Motor neuron (in vitro differentiated cells): ENCODE measurements at regions of chr2 and their contacts with region 1.

Region 1: DNA sequence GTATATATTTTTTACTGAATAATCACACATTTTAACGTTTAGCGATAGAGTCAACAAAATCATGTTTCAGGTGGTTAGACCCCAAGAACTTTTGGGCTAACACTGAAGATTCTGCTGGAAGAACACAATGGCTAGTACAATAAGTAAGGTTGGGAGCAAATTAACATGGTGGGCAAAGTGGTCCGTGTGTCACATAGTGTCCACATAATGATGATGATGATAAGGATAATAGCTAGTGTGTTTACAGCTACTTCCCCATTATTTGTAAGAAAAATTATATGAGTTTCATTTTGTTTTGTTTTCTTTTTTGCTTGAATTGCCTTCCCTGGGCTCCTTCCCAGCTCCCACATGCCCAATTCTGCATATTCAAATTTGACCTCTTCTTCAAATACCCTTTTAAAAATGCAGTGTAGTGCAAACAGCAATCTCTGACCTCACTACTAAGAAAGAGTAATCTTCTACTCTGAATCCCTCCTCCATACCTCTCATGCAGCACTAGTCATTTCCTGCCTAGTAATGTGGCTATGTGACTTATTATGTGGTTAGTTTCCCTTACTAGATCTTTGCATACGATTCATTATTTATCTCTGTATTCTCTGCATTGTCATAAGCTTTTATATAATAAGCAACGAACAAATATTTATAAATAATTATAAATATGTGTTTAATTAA is 16.9 kb upstream of the VPS54 start:
- ATAC-seq: peak in 2 of 8 experiments; percentile 71 to 92
- H3K4me3 ChIP-seq: no peak overlapping the region
- H3K27ac ChIP-seq: no peak overlapping the region
- H3K4me1 ChIP-seq: no peaks in the 10 kb centered on the region

Region 2: DNA sequence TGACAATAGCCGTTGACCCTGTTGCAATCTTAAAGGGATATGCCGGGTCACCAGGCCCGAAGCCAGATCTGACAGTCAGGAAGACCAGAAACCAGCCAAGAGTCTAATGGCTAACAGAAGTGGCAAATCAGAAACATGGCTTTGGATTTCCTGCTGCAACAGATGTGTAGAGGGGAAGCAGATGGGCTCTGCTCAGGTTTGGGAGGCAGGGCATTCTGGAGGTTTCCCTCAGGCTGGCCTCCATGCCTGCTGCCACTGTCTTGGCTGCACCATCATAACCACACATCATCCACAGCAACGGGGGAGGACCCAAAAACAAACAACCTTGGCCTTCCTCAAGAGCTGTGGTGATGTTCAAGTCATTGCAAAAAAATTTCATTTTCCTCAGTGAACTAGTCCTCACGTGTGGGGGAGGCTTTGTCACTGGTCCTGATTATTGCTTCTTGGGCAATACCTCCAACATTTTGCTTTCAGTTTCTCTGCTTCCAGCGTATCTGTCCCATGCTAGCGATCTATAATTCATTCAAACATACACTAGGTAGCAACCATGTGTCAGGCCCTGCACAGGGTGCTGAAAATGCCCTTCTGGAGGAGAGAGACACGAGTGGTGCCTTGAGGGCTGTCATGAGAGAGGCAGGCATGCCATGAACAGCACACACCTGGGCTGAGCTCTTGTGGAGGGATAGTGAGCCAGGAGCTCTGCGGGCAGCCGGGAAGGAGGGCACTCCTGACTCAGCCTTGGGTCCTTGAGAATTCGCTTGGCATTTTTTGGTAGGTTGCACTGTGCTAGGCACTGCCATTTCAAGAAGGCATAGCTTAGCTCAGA is 369.6 kb after region 1 on chr2:
- in situ Hi-C with region 1: no loop called
- ATAC-seq: peak in 2 of 8 experiments; percentile 4 to 12
- H3K4me3 ChIP-seq: no peak overlapping the region
- H3K27ac ChIP-seq: no peak overlapping the region
- H3K4me1 ChIP-seq: peaks cover 52 to 56% of the 10 kb centered on the region in 2 donors

Region 3: DNA sequence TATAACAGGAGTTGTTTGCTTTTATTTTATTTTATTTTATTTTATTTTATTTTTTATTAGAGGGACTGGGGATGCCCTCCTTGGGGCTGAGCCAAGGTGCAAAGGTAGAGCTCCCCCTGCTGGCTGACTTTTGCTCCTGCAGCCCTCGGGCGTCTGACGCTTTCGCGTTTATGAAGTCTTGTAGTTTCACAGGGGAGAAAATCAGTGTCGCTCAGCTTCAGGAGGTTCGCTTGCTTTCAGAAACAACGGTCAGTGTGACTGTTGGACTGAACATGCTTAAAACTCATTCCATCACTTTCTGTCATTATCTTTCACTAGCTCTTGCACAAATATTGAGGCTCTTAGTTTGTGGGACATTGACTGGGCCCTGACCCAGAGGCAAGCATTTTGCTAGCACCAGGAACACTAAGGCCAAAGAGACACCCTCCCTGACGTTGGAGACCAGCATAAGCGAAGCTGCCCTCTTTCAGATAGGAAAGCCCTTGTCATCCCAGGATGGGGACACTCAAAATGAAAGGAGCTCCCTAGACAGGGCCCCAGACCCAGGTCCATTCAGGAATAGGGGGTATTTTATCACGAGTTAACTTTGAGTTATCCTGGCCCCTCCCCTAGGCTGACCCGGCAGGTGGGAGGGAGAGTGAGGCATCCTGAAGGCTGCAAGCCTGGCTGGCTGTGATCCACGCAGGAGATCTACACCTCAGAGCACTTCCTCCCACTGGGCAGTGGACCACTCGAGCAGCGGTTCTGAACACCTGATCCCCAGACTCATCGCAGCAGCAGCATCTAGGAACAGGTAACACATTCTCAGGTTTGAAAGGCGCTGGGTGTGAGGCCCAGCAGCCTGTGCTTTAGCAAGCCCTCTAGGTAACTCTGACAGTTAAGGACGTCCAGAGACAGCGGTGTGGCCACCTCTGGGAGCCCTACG is 452.1 kb after region 1 on chr2:
- in situ Hi-C with region 1: loop called in 1 of 9 experiments (anchors 25 kb)
- ATAC-seq: peak; percentile 8 to 77 (median 60)
- H3K4me3 ChIP-seq: no peak overlapping the region
- H3K27ac ChIP-seq: no peak overlapping the region
- H3K4me1 ChIP-seq: peaks cover 11 to 22% of the 10 kb centered on the region in 2 donors